ENCODE measurements at regions of chr4 and their contacts with region 1.

Region 1: DNA sequence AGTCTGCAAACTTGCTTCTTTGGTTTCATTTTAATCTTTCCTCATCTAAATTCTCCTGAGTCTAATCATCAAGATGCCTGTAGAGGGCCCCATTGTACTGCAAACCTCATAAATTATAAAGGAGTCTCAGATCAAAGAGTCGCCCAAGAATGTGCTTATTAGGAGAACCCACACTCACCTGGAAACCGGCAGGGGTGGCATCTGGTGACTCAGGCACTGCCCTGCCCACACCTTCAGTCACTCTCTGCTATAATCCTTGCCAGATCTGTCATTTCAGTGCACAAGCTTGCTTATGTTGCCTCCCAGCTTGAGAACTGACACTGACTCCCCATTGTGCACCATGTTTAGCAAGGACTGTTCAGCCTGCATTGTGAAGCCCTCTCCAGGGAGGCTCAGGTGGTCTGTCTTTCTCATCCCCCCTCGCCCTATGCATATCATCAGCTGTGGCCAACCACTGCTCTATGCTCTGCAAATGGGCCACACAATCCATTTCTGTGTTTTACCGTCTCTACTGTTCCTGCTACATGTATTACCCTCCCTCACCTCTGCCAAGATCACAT is 12.4 kb downstream of the EPGN start:
- DNase-seq: peak; percentile 90
- H3K4me3 Mint-ChIP-seq: no peak overlapping the region
- H3K27ac Mint-ChIP-seq: no peak overlapping the region
- H3K4me1 Mint-ChIP-seq: peaks cover 36% of the 10 kb centered on the region
- H3K27me3 Mint-ChIP-seq: no peaks in the 10 kb centered on the region
- CTCF ChIP-seq: peak; percentile 67

Region 2: DNA sequence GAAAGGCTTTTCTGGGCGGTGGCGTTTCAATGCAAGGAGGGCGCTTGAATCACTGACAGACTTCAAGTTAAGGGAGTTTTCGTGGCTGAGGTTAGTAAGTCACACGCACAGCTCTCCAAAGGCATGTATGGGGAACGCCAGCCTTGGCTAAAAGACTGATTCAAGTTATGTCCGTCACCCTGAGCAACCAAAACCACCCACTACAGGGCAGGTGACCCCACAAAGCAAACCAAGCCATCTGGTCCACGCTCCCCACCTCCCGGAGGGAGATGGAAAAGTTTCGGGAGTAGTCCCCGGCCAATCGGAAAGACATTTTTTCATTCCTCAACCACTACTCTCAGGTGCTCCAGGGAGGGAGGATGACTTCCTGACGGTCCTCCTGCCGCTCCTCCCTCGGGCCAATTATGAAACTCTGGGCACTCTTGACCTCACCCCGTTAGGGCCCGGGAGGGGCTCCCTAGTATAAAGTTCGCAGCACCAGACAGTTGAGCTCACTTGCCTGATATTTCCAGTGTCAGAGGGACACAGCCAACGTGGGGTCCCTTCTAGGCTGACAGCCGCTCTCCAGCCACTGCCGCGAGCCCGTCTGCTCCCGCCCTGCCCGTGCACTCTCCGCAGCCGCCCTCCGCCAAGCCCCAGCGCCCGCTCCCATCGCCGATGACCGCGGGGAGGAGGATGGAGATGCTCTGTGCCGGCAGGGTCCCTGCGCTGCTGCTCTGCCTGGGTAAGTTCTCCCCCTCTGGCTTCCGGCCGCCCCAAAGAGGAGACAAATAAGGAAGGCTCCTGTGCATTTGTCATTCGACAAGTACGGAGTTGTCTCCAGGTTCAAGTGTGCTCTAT is 44.2 kb after region 1 on chr4 and contains the start of gene EREG:
- CTCF ChIA-PET with region 1: interaction called, 25 read pairs
- POLR2A ChIA-PET with region 1: interaction called, 23 read pairs
- intact Hi-C with region 1: no loop called
- DNase-seq: peak; percentile 66
- H3K4me3 Mint-ChIP-seq: peak within 1 kb of the TSS; percentile 77
- H3K27ac Mint-ChIP-seq: peak within 1 kb of the TSS; percentile 59
- H3K4me1 Mint-ChIP-seq: peaks cover 17% of the 10 kb centered on the region
- H3K27me3 Mint-ChIP-seq: no peaks in the 10 kb centered on the region
- CTCF ChIP-seq: no peak
- total RNA-seq, gene EREG: 28.3 and 34.0 TPM in 2 replicates

Region 3: DNA sequence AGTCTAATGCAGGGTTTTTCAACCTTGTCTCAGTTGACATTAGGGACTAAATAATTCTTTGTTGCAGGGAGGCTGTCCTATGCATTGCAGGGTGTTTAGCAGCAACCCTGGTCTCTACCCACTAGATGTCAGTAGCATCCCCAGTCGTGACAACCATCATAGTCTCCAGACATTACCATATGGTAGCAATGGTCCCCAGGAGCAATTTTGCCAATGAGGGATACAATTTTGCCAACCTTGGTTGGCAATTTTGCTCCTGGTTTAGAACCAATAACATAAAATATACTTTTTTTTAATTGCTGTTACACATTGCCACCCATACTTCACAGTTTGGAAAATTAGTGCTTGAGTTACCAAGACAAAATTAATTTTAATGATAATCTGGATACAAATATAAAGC is 50.3 kb after region 1 on chr4:
- CTCF ChIA-PET with region 1: interaction called, 28 read pairs
- POLR2A ChIA-PET with region 1: interaction called, 23 read pairs
- intact Hi-C with region 1: loop called (anchors 1 kb)
- DNase-seq: peak; percentile 84
- H3K4me3 Mint-ChIP-seq: no peak overlapping the region
- H3K27ac Mint-ChIP-seq: no peak overlapping the region
- H3K4me1 Mint-ChIP-seq: peaks cover 35% of the 10 kb centered on the region
- H3K27me3 Mint-ChIP-seq: no peaks in the 10 kb centered on the region
- CTCF ChIP-seq: peak; percentile 83

Region 4: DNA sequence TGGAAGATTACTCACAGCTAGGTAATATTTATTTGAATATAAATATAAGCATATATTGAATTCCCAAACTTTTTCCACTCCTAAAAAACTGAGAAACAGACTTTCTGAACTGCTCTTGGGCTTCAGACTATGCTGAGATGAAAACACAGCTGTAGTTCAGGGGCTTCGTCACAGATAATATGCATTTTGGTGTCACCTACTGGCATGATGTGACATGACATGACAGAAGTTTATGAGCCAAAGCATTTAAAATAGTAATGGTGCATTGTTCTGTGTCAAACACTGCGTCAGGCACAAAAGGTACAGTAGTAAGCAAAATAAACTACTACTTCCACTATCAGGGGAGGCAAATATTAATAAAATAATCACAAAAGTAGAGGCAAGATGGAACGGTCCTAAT is 302.4 kb after region 1 on chr4:
- CTCF ChIA-PET with region 1: interaction called, 3 read pairs
- POLR2A ChIA-PET with region 1: interaction called, 3 read pairs
- intact Hi-C with region 1: loop called (anchors 2 kb)
- DNase-seq: peak; percentile 74
- H3K4me3 Mint-ChIP-seq: no peak overlapping the region
- H3K27ac Mint-ChIP-seq: no peak overlapping the region
- H3K4me1 Mint-ChIP-seq: peaks cover 52% of the 10 kb centered on the region
- H3K27me3 Mint-ChIP-seq: no peaks in the 10 kb centered on the region
- CTCF ChIP-seq: peak; percentile 47

Measured in MCF 10A (cell line).